CD4-positive, alpha-beta T cell (primary cell): ENCODE measurements at regions of chr15 and their contacts with region 1.

Region 1: GRCh38 chr15:34987985-34988873 is at the start of gene ZNF770:
- DNase-seq: peak; percentile 59 to 94 (median 80)
- ATAC-seq: peak; percentile 84
- H3K4me3 ChIP-seq: peak within 1 kb of the TSS; percentile 89
- H3K4me3 Mint-ChIP-seq: peak within 1 kb of the TSS; percentile 99
- H3K27ac ChIP-seq: peak within 1 kb of the TSS; percentile 93 to 98
- H3K27ac Mint-ChIP-seq: peak within 1 kb of the TSS; percentile 98
- H3K4me1 ChIP-seq: peaks cover 23% of the 10 kb centered on the region
- H3K4me1 Mint-ChIP-seq: peaks cover 55% of the 10 kb centered on the region
- H3K27me3 ChIP-seq: no peaks in the 10 kb centered on the region
- H3K27me3 Mint-ChIP-seq: no peaks in the 10 kb centered on the region
- CTCF ChIP-seq: no peak
- total RNA-seq, gene ZNF770: 35.4 to 37.9 TPM

Region 2: GRCh38 chr15:34101366-34102175 is 886.7 kb before region 1 on chr15 and contains the starts of genes EMC7 and PGBD4:
- CTCF ChIA-PET with region 1: no interaction called
- POLR2A ChIA-PET with region 1: interaction called, 17 read pairs
- intact Hi-C with region 1: loop called in 1 of 2 experiments (anchors 5 kb)
- DNase-seq: peak; percentile 97 to 100 (median 99)
- ATAC-seq: peak; percentile 96
- H3K4me3 ChIP-seq: peak within 1 kb of the TSS; percentile 80
- H3K4me3 Mint-ChIP-seq: peak within 1 kb of the TSS; percentile 91
- H3K27ac ChIP-seq: peak within 1 kb of the TSS; percentile 86 to 97
- H3K27ac Mint-ChIP-seq: peak within 1 kb of the TSS; percentile 96
- H3K4me1 ChIP-seq: peaks cover 20% of the 10 kb centered on the region
- H3K4me1 Mint-ChIP-seq: peaks cover 54% of the 10 kb centered on the region
- H3K27me3 ChIP-seq: no peaks in the 10 kb centered on the region
- H3K27me3 Mint-ChIP-seq: no peaks in the 10 kb centered on the region
- CTCF ChIP-seq: no peak
- total RNA-seq, gene EMC7: 54.0 to 54.6 TPM
- total RNA-seq, gene PGBD4: 2.3 to 2.6 TPM

Region 3: DNA sequence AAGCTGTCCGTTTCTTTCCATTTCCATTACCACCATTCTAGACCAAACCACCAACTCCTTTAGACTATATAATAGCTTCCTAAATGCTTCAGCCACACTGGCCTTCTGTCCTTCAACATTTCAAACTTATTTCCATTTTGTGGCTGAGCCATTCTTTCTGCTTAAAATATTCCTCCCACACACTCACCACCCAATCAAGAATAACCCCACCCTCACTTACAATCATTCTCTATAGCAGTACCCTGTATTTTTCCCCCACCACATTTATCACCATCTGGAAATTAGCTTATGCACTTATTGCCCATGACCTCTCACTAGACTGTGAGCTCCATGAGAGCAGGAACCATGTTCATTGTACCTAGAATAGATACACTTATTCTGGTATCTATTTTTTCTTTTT is 784.9 kb before region 1 on chr15:
- CTCF ChIA-PET with region 1: no interaction called
- POLR2A ChIA-PET with region 1: no interaction called
- intact Hi-C with region 1: no loop called
- DNase-seq: no peak
- ATAC-seq: no peak
- H3K4me3 ChIP-seq: no peak overlapping the region
- H3K4me3 Mint-ChIP-seq: no peak overlapping the region
- H3K27ac ChIP-seq: no peak overlapping the region
- H3K27ac Mint-ChIP-seq: no peak overlapping the region
- H3K4me1 ChIP-seq: no peaks in the 10 kb centered on the region
- H3K4me1 Mint-ChIP-seq: peaks cover 29% of the 10 kb centered on the region
- H3K27me3 ChIP-seq: no peaks in the 10 kb centered on the region
- H3K27me3 Mint-ChIP-seq: no peaks in the 10 kb centered on the region
- CTCF ChIP-seq: no peak

Region 4: DNA sequence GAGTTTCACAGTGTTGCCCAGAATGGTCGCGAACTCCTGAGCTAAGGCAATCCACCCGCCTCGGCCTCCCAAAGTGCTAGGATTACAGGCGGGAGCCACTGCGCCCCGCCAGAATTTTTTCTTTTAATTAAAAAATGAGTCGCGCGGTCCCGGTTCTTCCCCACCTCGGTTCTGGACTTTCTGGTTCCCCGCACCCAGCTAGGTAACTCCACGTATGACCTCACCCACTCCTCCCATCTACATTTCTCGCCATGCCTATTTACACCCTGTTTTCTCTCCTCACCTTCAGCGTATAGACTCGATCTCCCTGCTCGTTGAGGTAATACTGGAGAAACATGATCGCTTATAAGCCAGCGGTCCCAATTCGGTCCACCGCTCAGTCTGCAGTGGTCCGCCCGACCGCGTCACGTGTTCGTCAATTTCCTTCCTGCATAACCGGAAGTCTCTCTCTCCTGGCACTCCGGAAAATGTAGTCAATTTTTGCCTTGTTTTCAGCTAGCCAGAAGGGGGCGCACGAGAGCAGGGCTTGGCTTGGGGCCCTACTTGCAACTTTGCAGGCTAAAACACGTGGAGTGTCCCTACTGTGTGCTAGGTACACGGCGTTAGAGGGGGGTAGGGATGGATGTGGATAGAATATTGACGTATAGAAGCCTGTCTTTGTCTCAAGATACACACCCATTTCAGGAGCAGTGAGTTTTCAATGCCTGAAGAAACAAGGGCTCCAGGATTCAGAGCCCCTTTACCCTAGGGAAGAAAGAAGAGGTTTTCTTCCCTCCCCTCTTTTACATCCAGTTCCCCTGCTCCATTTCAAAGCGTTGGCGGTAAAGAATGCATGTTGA is 645.3 kb before region 1 on chr15 and contains the starts of genes NOP10 and NUTM1:
- CTCF ChIA-PET with region 1: no interaction called
- POLR2A ChIA-PET with region 1: interaction called, 4 read pairs
- intact Hi-C with region 1: loop called in 1 of 2 experiments (anchors 5 kb)
- DNase-seq: peak; percentile 86 to 96 (median 92)
- ATAC-seq: peak; percentile 85
- H3K4me3 ChIP-seq: peak within 1 kb of the TSS; percentile 89
- H3K4me3 Mint-ChIP-seq: peak within 1 kb of the TSS; percentile 88
- H3K27ac ChIP-seq: peak within 1 kb of the TSS; percentile 85 to 87
- H3K27ac Mint-ChIP-seq: peak within 1 kb of the TSS; percentile 84
- H3K4me1 ChIP-seq: peaks cover 23% of the 10 kb centered on the region
- H3K4me1 Mint-ChIP-seq: peaks cover 17% of the 10 kb centered on the region
- H3K27me3 ChIP-seq: no peaks in the 10 kb centered on the region
- H3K27me3 Mint-ChIP-seq: no peaks in the 10 kb centered on the region
- CTCF ChIP-seq: peak; percentile 94
- total RNA-seq, gene NOP10: 44.4 to 44.8 TPM
- total RNA-seq, gene NUTM1: not detected

Region 5: DNA sequence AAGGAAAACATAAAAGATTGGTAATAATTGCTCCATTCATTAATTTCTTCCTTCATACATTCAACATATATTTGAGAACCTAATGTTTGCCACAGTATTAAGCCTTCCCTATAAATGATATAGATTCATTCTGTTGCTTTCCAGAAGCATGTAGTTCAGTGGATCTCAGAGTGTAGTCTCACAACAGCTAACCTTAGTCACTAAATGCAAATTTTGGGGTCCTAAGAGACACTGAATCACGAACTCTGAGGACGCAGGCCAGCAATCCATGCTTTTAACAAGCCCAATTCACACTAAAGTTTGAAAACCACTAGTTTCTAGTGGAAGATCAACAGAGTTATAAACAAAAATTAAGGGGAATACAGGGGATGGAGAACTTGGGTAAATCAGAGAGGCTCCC is 11.5 kb before region 1 on chr15:
- CTCF ChIA-PET with region 1: no interaction called
- POLR2A ChIA-PET with region 1: interaction called, 19 read pairs
- intact Hi-C with region 1: no loop called
- DNase-seq: no peak
- ATAC-seq: no peak
- H3K4me3 ChIP-seq: no peak overlapping the region
- H3K4me3 Mint-ChIP-seq: no peak overlapping the region
- H3K27ac ChIP-seq: no peak overlapping the region
- H3K27ac Mint-ChIP-seq: no peak overlapping the region
- H3K4me1 ChIP-seq: no peaks in the 10 kb centered on the region
- H3K4me1 Mint-ChIP-seq: peaks cover 7% of the 10 kb centered on the region
- H3K27me3 ChIP-seq: no peaks in the 10 kb centered on the region
- H3K27me3 Mint-ChIP-seq: no peaks in the 10 kb centered on the region
- CTCF ChIP-seq: no peak

Region 6: GRCh38 chr15:36579792-36580431 is 1591.7 kb after region 1 on chr15:
- CTCF ChIA-PET with region 1: no interaction called
- POLR2A ChIA-PET with region 1: no interaction called
- intact Hi-C with region 1: loop called in 1 of 2 experiments (anchors 2 kb)
- DNase-seq: peak in 10 of 14 experiments; percentile 2 to 53 (median 12)
- ATAC-seq: peak; percentile 22
- H3K4me3 ChIP-seq: peak overlapping the region; percentile 67
- H3K4me3 Mint-ChIP-seq: peak overlapping the region; percentile 91
- H3K27ac ChIP-seq: peak overlapping the region in 1 of 2 donors; percentile 85
- H3K27ac Mint-ChIP-seq: peak overlapping the region; percentile 87
- H3K4me1 ChIP-seq: peaks cover 9% of the 10 kb centered on the region
- H3K4me1 Mint-ChIP-seq: peaks cover 37% of the 10 kb centered on the region
- H3K27me3 ChIP-seq: no peaks in the 10 kb centered on the region
- H3K27me3 Mint-ChIP-seq: no peaks in the 10 kb centered on the region
- CTCF ChIP-seq: no peak